CD4-positive, alpha-beta memory T cell (primary cell): ENCODE measurements at regions of chr7 and their contacts with region 1.

Region 1: DNA sequence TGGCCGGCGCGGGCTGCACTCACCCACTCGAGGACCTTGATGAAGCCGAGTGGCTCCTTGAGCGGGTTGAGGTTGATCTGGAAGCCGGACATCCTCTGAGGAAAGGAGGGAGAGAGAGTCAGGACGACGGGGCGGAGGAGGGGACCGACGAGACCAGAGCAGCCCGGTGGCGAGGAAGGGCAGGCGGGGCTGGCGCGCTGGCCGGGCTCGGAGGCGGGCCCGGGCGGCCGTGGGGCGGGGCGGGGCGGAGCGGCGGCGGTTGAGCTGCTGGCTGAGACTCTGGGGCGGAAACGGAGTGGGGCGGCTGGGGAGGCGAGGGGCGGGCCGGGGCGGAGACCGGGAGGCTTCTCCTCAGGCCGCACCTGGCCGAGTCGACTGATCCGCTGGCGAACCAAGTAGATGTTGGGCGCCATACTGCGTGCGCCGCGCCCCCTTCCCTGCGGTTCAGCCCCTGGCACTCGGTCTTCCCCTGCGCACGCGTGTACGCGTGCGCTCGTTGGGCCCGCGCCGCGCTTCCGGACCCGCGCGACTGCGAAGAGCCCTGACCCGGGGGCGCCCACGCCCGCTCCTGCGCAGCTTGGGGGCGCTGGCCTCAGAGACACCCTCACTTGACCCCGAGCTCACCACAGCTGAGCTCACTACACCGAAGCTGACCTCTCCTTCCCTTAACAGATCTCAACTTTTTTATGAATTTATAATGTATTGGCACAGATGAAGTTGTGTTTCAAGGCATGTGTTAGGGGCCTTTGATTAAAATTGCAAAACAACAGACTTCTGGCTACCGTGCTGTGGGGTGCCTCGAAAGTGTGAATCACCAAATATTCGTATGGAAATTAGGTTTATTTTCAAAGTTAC is at the start of gene SYPL1:
- DNase-seq: peak; percentile 91 to 93 (median 92)
- H3K4me3 ChIP-seq: peak within 1 kb of the TSS; percentile 60 to 76
- H3K4me3 Mint-ChIP-seq: peak within 1 kb of the TSS; percentile 88 to 96 (median 92)
- H3K27ac ChIP-seq: peak within 1 kb of the TSS; percentile 69
- H3K27ac Mint-ChIP-seq: peak within 1 kb of the TSS; percentile 84 to 98 (median 97)
- H3K4me1 ChIP-seq: peaks cover 52% of the 10 kb centered on the region
- H3K4me1 Mint-ChIP-seq: peaks cover 53 to 75% (median 65%) of the 10 kb centered on the region in 4 donors
- H3K27me3 ChIP-seq: no peaks in the 10 kb centered on the region
- H3K27me3 Mint-ChIP-seq: no peaks in the 10 kb centered on the region
- total RNA-seq, gene SYPL1: 46.9 to 47.9 TPM

Region 2: GRCh38 chr7:104943502-104944343 is 1168.6 kb before region 1 on chr7:
- CTCF ChIA-PET with region 1: no interaction called
- POLR2A ChIA-PET with region 1: no interaction called
- intact Hi-C with region 1: loop called (anchors 10 kb)
- DNase-seq: peak; percentile 75 to 92 (median 81)
- H3K4me3 ChIP-seq: peak overlapping the region; percentile 1 to 15
- H3K4me3 Mint-ChIP-seq: peak overlapping the region; percentile 82 to 92 (median 88)
- H3K27ac ChIP-seq: peak overlapping the region; percentile 94
- H3K27ac Mint-ChIP-seq: peak overlapping the region; percentile 100
- H3K4me1 ChIP-seq: peaks cover 59% of the 10 kb centered on the region
- H3K4me1 Mint-ChIP-seq: peaks cover 45 to 71% (median 58%) of the 10 kb centered on the region in 4 donors
- H3K27me3 ChIP-seq: no peaks in the 10 kb centered on the region
- H3K27me3 Mint-ChIP-seq: peaks cover 0 to 1% of the 10 kb centered on the region in 2 donors

Region 3: DNA sequence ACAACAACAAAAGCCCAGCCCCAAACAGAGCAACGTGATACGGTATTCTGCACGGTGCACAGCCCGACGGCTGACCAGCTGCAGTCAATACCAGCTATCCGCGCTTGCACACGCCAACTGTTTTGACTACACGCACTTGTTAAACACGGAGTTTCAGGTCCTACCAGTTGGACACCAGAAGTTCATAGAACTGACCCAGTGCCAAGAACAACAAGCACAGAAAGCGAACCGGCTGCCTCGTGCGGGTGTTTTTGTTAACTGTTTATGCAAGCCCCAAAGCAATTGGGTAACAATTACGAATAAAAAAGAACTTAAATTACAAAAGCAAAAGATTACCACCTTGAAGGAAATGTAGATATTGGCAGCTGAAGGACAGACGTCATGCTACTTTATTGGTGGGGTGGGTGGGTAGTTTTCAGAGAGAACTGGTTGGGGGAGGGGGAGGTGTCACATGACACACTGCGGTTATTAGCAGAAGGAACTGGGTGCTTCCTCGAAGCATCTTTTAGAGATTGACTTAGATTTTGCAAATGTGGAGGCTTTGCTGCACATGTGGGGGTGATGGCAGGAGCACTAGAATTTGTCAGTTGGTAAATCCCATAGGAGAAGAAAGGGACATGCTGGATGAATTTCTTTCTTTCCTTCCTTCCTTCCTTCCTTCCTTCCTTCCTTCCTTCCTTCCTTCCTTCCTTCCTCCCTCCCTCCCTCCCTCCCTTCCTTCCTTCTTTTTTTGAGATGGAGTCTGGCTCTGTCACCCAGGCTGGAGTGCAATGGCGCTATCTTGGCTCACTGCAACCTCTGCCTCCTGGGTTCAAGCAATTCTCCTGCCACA is 420.4 kb before region 1 on chr7:
- CTCF ChIA-PET with region 1: no interaction called
- POLR2A ChIA-PET with region 1: interaction called, 3 read pairs
- intact Hi-C with region 1: loop called (anchors 5 kb)
- DNase-seq: peak; percentile 84 to 95 (median 91)
- H3K4me3 ChIP-seq: peak overlapping the region; percentile 71 to 75
- H3K4me3 Mint-ChIP-seq: peak overlapping the region; percentile 91 to 98 (median 94)
- H3K27ac ChIP-seq: peak overlapping the region; percentile 89
- H3K27ac Mint-ChIP-seq: peak overlapping the region; percentile 96 to 100 (median 98)
- H3K4me1 ChIP-seq: peaks cover 44% of the 10 kb centered on the region
- H3K4me1 Mint-ChIP-seq: peaks cover 29 to 78% (median 57%) of the 10 kb centered on the region in 4 donors
- H3K27me3 ChIP-seq: no peaks in the 10 kb centered on the region
- H3K27me3 Mint-ChIP-seq: no peaks in the 10 kb centered on the region

Region 4: DNA sequence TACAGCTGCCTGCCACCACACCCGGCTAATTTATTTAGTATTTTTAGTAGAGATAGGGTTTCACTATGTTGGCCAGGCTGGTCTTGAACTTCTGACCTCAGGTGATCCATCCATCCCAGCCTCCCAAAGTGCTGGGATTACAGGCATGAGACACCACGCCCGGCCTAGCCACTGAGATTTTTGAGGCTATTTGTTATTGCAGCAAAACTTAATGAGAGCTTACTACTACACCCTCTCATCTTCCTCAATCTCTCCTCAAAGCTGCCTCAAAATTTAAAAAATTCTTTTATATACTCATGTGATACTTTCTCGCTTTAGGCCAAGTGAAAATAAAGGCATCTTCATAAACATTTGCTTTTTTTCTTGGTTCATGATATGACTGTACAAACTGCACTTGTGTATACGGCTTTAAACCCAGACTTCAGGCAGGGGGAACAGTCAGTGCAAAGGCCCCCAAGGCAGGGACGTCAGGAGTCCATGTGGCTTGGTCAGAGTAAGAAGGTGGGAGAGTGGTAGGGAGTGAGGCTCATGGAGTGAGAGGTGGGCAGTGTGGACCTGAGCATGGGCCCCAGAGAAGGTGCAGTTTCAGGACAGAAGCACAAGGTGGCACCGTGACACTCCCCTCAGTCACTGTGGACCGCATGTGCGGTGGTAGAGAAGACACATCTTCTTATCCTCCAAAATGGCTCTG is 55.7 kb before region 1 on chr7:
- CTCF ChIA-PET with region 1: interaction called, 12 read pairs
- POLR2A ChIA-PET with region 1: no interaction called
- intact Hi-C with region 1: loop called (anchors 2 kb)
- DNase-seq: peak; percentile 62 to 72 (median 69)
- H3K4me3 ChIP-seq: no peak overlapping the region
- H3K4me3 Mint-ChIP-seq: peak overlapping the region in 3 of 8 donors; percentile 15 to 49 (median 17)
- H3K27ac ChIP-seq: no peak overlapping the region
- H3K27ac Mint-ChIP-seq: peak overlapping the region in 2 of 7 donors; percentile 12 to 54
- H3K4me1 ChIP-seq: peaks cover 16% of the 10 kb centered on the region
- H3K4me1 Mint-ChIP-seq: peaks cover 8 to 21% (median 13%) of the 10 kb centered on the region in 4 donors
- H3K27me3 ChIP-seq: no peaks in the 10 kb centered on the region
- H3K27me3 Mint-ChIP-seq: peaks cover 0 to 4% of the 10 kb centered on the region in 2 donors

Region 5: DNA sequence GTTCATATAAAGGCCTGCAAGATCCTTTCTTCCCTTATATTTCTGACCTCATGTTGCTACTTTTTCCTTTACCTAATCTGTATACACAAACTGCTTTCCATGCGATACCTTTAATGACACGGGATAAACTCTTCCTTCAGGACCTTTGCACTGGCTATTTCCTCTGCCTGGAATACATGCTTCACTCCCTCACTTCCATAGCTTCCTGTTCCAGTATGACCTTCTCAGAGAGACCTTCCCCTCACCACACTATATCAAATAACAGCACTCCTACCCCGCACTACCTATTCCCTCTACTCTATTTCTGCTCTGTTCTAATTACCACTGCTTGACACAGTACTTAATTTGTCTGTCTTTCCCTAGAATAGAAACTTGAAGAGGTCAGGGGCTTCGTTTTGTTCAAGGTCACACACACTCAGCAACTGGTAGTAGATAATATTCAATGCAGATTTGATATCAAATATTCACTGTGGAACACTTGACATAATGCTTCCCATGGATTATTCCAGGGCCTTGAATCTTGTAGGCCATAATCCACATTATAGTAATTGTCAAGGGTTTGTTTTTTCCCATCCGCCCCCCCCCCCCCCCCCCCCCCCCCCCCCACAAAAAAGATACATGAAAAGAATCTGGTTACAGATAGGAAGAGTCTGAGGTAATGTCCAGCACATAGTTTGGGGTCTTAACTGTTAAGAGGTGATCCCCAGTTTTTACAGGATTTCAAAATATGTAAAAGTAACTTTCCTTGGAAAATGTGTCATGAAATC is 11.3 kb before region 1 on chr7:
- CTCF ChIA-PET with region 1: interaction called, 4 read pairs
- POLR2A ChIA-PET with region 1: interaction called, 24 read pairs
- intact Hi-C with region 1: no loop called
- DNase-seq: no peak
- H3K4me3 ChIP-seq: no peak overlapping the region
- H3K4me3 Mint-ChIP-seq: no peak overlapping the region
- H3K27ac ChIP-seq: no peak overlapping the region
- H3K27ac Mint-ChIP-seq: peak overlapping the region in 3 of 7 donors; percentile 17 to 46 (median 23)
- H3K4me1 ChIP-seq: peaks cover 38% of the 10 kb centered on the region
- H3K4me1 Mint-ChIP-seq: peaks cover 45 to 65% (median 56%) of the 10 kb centered on the region in 4 donors
- H3K27me3 ChIP-seq: no peaks in the 10 kb centered on the region
- H3K27me3 Mint-ChIP-seq: no peaks in the 10 kb centered on the region

Region 6: GRCh38 chr7:106285051-106285854 is 172.9 kb after region 1 on chr7:
- CTCF ChIA-PET with region 1: no interaction called
- POLR2A ChIA-PET with region 1: interaction called, 14 read pairs
- intact Hi-C with region 1: loop called (anchors 2 kb)
- DNase-seq: peak; percentile 93 to 99 (median 97)
- H3K4me3 ChIP-seq: peak overlapping the region; percentile 86 to 97
- H3K4me3 Mint-ChIP-seq: peak overlapping the region; percentile 95 to 98 (median 96)
- H3K27ac ChIP-seq: peak overlapping the region; percentile 95
- H3K27ac Mint-ChIP-seq: peak overlapping the region; percentile 93 to 99 (median 98)
- H3K4me1 ChIP-seq: peaks cover 29% of the 10 kb centered on the region
- H3K4me1 Mint-ChIP-seq: peaks cover 14 to 28% (median 21%) of the 10 kb centered on the region in 4 donors
- H3K27me3 ChIP-seq: no peaks in the 10 kb centered on the region
- H3K27me3 Mint-ChIP-seq: no peaks in the 10 kb centered on the region

Region 7: GRCh38 chr7:106704000-106704840 is 591.9 kb after region 1 on chr7:
- CTCF ChIA-PET with region 1: no interaction called
- POLR2A ChIA-PET with region 1: no interaction called
- intact Hi-C with region 1: no loop called
- DNase-seq: peak; percentile 17 to 39 (median 24)
- H3K4me3 ChIP-seq: no peak overlapping the region
- H3K4me3 Mint-ChIP-seq: peak overlapping the region; percentile 22 to 72 (median 52)
- H3K27ac ChIP-seq: peak overlapping the region; percentile 29
- H3K27ac Mint-ChIP-seq: peak overlapping the region; percentile 8 to 91 (median 88)
- H3K4me1 ChIP-seq: peaks cover 15% of the 10 kb centered on the region
- H3K4me1 Mint-ChIP-seq: peaks cover 9 to 24% (median 14%) of the 10 kb centered on the region in 4 donors
- H3K27me3 ChIP-seq: no peaks in the 10 kb centered on the region
- H3K27me3 Mint-ChIP-seq: peaks cover 0 to 3% of the 10 kb centered on the region in 2 donors